ENCODE measurements at regions of chr1 and their contacts with region 1.

Region 1: GRCh38 chr1:10932088-10932487 is 80.4 kb upstream of the TARDBP start:
- DNase-seq: no peak
- H3K4me3 ChIP-seq: no peak overlapping the region
- H3K27ac ChIP-seq: no peak overlapping the region
- H3K4me1 ChIP-seq: no peaks in the 10 kb centered on the region
- H3K27me3 ChIP-seq: no peaks in the 10 kb centered on the region
- CTCF ChIP-seq: no peak

Region 2: DNA sequence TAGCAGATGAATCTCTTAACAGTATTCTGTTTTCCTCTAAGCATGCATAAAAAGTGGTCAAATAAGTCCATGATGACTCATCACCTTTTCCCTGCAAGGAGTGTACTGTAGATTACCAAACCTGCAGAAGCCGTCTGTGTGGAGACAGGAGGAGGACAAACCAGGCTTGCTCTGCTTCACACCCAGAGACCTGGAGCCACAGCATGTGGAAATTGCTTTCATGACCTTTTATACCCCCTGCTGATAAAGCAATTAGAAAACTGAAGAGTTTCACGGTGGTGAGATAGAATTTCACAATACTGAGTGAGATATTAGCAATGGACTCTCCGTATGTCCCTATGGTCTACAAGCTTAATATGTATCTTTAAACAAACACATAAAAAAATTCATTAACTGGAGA is 472.9 kb before region 1 on chr1:
- CTCF ChIA-PET with region 1: interaction called, 13 read pairs
- POLR2A ChIA-PET with region 1: no interaction called
- intact Hi-C with region 1: no loop called
- DNase-seq: peak; percentile 70 to 97
- H3K4me3 ChIP-seq: no peak overlapping the region
- H3K27ac ChIP-seq: peak overlapping the region; percentile 78
- H3K4me1 ChIP-seq: peaks cover 19% of the 10 kb centered on the region
- H3K27me3 ChIP-seq: no peaks in the 10 kb centered on the region
- CTCF ChIP-seq: no peak